ENCODE measurements at regions of chr21 and their contacts with region 1.

Region 1: GRCh38 chr21:43611598-43612369 is 47.5 kb downstream of the HSF2BP start:
- DNase-seq: peak; percentile 36 to 53 (median 45)
- H3K4me3 ChIP-seq: no peak overlapping the region
- H3K27ac ChIP-seq: no peak overlapping the region
- H3K4me1 ChIP-seq: peaks cover 2 to 15% (median 6%) of the 10 kb centered on the region in 4 experiments
- H3K27me3 ChIP-seq: no peaks in the 10 kb centered on the region

Region 2: GRCh38 chr21:43600642-43601402 is 11.0 kb before region 1 on chr21:
- CTCF ChIA-PET with region 1: interaction called, 11 read pairs
- POLR2A ChIA-PET with region 1: no interaction called
- DNase-seq: no peak
- H3K4me3 ChIP-seq: no peak overlapping the region
- H3K27ac ChIP-seq: no peak overlapping the region
- H3K4me1 ChIP-seq: peaks cover 3 to 26% (median 6%) of the 10 kb centered on the region in 4 experiments
- H3K27me3 ChIP-seq: no peaks in the 10 kb centered on the region

Region 3: DNA sequence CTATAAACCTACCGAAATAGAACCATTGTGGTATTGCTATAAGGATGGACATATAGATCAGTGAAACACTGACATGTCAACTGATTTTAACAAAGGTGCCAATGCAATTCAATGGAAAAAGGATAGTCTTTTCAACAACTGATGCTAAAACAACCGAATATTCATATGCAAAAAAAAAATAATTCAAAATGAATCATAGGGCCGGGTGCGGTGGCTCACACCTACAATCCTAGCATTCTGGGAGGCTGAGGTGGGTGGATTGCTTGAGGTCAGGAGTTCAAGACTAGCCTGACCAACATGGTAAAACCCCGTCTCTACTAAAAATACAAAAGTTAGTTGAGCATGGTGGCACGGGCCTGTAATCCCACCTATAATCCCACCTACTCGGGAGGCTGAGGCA is 23.7 kb after region 1 on chr21:
- CTCF ChIA-PET with region 1: no interaction called
- POLR2A ChIA-PET with region 1: no interaction called
- DNase-seq: no peak
- H3K4me3 ChIP-seq: no peak overlapping the region
- H3K27ac ChIP-seq: no peak overlapping the region
- H3K4me1 ChIP-seq: no peaks in the 10 kb centered on the region
- H3K27me3 ChIP-seq: no peaks in the 10 kb centered on the region

Region 4: DNA sequence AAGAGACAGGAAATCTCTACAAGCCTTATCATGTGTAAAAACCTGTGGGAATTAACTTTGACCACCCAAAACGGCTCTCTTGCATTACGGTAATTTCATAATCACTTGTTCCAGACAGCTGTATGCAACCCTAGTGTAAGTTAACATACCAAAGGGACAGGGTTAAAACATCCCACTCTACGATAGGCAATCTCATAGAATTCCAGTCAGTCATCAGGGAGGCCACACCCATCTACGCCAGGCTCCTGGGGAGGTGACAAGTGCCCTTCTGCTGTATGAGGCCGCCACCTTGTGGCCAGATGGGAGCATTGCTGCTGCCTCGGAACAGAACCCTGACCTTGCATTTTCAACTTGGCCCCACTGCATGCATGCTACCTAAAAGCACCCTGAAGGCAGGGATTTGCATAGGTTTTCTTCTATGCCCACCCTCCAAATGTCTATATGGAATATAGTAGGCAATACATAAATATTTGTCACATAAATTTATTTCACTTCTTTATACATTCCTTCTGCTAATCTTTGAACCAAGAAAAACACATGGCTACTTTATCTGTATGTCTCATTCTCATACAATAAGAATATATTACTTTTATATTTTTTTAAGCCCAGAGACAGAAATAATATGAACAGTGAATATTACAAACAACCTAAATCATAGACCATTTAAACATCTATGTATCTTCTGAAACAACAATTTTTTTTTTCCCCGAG is 34.9 kb after region 1 on chr21:
- CTCF ChIA-PET with region 1: interaction called, 26 read pairs
- POLR2A ChIA-PET with region 1: no interaction called
- DNase-seq: peak; percentile 88 to 90 (median 89)
- H3K4me3 ChIP-seq: peak overlapping the region in 1 of 7 experiments; percentile 36
- H3K27ac ChIP-seq: no peak overlapping the region
- H3K4me1 ChIP-seq: peaks cover 2 to 20% (median 12%) of the 10 kb centered on the region in 4 experiments
- H3K27me3 ChIP-seq: no peaks in the 10 kb centered on the region

Region 5: DNA sequence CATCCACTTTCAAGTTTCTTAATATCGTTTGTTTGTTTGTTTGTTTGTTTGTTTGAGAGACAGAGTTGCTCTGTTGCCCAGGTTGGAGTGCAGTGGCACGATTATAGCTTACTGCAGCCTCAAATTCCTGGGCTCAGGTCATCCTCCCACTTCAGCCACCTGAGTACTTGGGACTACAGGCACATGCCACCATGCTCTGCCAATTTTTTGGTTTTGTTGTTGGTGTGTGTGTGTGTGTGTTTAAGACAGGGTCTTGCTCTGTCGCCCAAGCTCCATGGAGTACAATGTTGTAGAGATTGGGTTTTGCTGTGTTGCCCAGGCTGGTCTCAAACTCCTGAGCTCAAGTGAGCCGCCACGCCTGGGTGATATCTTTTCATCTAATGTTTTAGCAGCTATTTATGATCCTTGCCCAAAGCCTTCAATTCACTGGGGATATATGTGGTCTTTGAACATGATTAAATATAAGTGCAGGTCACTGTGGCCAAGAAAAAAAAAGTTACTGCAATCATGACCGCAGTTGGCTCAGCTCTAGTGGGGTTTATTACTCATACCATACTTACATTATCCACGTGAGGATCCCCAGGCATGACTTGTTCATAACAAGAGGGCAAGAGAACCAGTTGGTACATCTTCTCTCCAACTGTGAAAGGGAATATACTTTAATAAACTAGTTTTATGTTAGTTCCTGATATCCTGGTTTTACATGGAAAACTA is 55.6 kb after region 1 on chr21:
- CTCF ChIA-PET with region 1: no interaction called
- POLR2A ChIA-PET with region 1: no interaction called
- DNase-seq: no peak
- H3K4me3 ChIP-seq: no peak overlapping the region
- H3K27ac ChIP-seq: no peak overlapping the region
- H3K4me1 ChIP-seq: peaks cover 2 to 17% (median 9%) of the 10 kb centered on the region in 4 experiments
- H3K27me3 ChIP-seq: no peaks in the 10 kb centered on the region

Measured in common myeloid progenitor, CD34-positive (primary cell).